Transverse colon (tissue), 4 donors: ENCODE measurements at regions of chr17 and their contacts with region 1.

Region 1: GRCh38 chr17:52181782-52182181 is 23.3 kb upstream of the CA10 start:
- DNase-seq: no peak
- H3K4me3 ChIP-seq: no peak overlapping the region
- H3K27ac ChIP-seq: no peak overlapping the region
- H3K4me1 ChIP-seq: no peaks in the 10 kb centered on the region
- H3K27me3 ChIP-seq: no peaks in the 10 kb centered on the region
- CTCF ChIP-seq: no peak
- EP300 ChIP-seq: no peak
- POLR2A ChIP-seq: no peak

Region 2: GRCh38 chr17:52096056-52096455 is 85.7 kb before region 1 on chr17:
- in situ Hi-C with region 1: loop called in 1 of 4 experiments (anchors 25 kb)
- intact Hi-C with region 1: no loop called
- DNase-seq: no peak
- H3K4me3 ChIP-seq: no peak overlapping the region
- H3K27ac ChIP-seq: no peak overlapping the region
- H3K4me1 ChIP-seq: no peaks in the 10 kb centered on the region
- H3K27me3 ChIP-seq: no peaks in the 10 kb centered on the region
- CTCF ChIP-seq: no peak
- EP300 ChIP-seq: no peak
- POLR2A ChIP-seq: no peak

Region 3: DNA sequence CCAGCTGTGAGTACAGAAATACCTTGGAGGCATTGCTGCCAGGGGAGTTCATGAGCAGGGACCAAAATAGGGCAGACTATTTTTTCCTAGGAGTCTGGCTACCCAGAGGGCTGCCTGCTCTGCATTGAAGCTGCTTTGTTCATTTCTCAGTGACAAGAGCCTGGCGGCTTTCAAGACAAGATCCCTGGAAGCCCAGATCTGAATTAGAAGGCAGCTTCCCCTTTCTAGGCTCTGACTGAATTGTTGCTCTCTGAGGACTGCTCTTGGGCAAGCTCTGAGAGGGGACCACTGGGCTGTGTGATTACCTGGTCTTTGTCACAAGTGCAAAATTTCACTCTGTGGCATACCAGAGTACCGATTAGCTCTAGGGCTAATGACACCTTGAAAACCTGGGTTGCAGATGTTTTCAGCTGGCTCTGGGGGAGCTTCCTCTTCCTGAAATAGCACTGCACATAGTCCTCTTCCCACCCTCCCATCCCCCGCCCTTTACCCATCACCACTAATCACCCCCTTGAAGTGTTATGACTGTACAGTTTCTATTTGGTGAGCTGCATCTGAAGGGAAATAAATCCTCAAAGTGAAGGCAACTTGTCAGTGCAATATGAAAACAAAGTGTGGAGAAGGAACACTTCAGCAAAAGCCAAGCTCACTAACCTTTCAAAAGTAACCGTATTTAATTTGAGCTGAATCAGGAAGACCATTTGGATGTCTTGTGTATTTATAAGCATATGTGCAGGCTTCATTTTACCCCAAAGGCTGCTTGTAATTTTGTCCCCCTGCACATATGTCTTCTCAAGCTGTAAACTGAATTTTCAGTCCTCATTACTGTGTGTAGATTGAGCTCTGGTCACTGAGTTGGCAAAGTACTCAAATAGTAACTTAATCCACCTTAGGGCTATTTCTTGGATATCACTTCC is 20.6 kb after region 1 on chr17:
- in situ Hi-C with region 1: no loop called
- intact Hi-C with region 1: loop called (anchors 2 kb)
- DNase-seq: no peak
- H3K4me3 ChIP-seq: no peak overlapping the region
- H3K27ac ChIP-seq: no peak overlapping the region
- H3K4me1 ChIP-seq: no peaks in the 10 kb centered on the region
- H3K27me3 ChIP-seq: no peaks in the 10 kb centered on the region
- CTCF ChIP-seq: no peak
- EP300 ChIP-seq: no peak
- POLR2A ChIP-seq: no peak